ENCODE measurements at regions of chr6 and their contacts with region 1.

Region 1: GRCh38 chr6:73878403-73878802 is 182.4 kb downstream of the CD109 start:
- DNase-seq: no peak
- ATAC-seq: no peak
- H3K4me3 ChIP-seq: no peak overlapping the region
- H3K4me3 Mint-ChIP-seq: no peak overlapping the region
- H3K27ac ChIP-seq: no peak overlapping the region
- H3K27ac Mint-ChIP-seq: no peak overlapping the region
- H3K4me1 ChIP-seq: no peaks in the 10 kb centered on the region
- H3K4me1 Mint-ChIP-seq: peaks cover 0 to 8% of the 10 kb centered on the region in 2 donors
- H3K27me3 ChIP-seq: no peaks in the 10 kb centered on the region
- H3K27me3 Mint-ChIP-seq: peaks cover 3 to 5% of the 10 kb centered on the region in 2 donors
- CTCF ChIP-seq: no peak

Region 2: DNA sequence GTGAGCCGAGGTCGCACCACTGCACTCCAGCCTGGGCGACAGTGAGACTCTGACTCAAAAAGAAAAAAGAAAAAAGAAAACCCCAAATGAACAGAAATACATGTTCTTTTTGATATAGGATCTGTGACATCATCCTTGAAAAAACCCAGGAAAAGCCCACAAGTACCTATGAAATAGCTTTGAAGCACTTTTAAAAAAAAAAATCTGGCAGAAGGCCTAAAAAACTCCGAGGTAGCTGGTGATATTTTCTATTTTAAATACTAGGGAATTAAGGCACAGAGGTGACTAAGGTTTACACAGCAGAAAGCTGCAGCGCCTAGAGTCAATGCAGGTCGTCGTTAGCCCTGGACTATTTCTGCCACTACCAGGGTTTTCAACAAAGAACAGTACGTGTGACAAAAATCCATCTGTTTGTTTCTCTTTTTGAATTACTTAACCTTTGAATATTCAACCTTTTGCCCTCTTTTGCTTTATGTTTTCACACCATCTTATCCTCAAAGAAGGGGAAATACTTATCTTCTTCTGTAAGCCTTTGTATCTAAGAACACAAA is 318.1 kb before region 1 on chr6:
- intact Hi-C with region 1: no loop called
- DNase-seq: no peak
- ATAC-seq: no peak
- H3K4me3 ChIP-seq: no peak overlapping the region
- H3K4me3 Mint-ChIP-seq: no peak overlapping the region
- H3K27ac ChIP-seq: no peak overlapping the region
- H3K27ac Mint-ChIP-seq: no peak overlapping the region
- H3K4me1 ChIP-seq: no peaks in the 10 kb centered on the region
- H3K4me1 Mint-ChIP-seq: peaks cover 0 to 5% of the 10 kb centered on the region in 2 donors
- H3K27me3 ChIP-seq: no peaks in the 10 kb centered on the region
- H3K27me3 Mint-ChIP-seq: no peaks in the 10 kb centered on the region
- CTCF ChIP-seq: no peak

Region 3: DNA sequence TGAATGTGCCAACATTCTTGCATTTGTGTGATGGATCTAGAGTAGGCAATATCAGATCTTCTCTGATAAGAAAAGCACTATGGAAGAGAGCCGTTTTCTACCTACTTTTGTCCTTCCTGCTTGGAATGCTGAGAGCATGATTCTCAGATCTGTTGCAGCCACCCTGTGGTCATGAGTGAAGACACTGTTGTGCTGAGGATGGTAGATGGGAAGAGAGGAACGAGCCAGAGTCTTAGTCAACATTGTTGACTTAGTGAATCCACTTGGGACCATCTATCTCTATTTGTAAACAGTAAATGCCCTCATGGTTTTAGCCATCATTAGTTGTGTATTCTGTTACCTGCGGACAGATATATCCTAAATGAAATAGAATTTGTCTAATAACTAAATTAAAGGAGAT is 20.2 kb after region 1 on chr6:
- intact Hi-C with region 1: loop called (anchors 1 kb)
- DNase-seq: no peak
- ATAC-seq: no peak
- H3K4me3 ChIP-seq: no peak overlapping the region
- H3K4me3 Mint-ChIP-seq: no peak overlapping the region
- H3K27ac ChIP-seq: no peak overlapping the region
- H3K27ac Mint-ChIP-seq: no peak overlapping the region
- H3K4me1 ChIP-seq: no peaks in the 10 kb centered on the region
- H3K4me1 Mint-ChIP-seq: no peaks in the 10 kb centered on the region
- H3K27me3 ChIP-seq: no peaks in the 10 kb centered on the region
- H3K27me3 Mint-ChIP-seq: no peaks in the 10 kb centered on the region
- CTCF ChIP-seq: no peak